Naive thymus-derived CD4-positive, alpha-beta T cell (primary cell): ENCODE measurements at regions of chr2 and their contacts with region 1.

Region 1: GRCh38 chr2:98608116-98608999 is at the starts of genes COA5 and UNC50:
- DNase-seq: peak; percentile 82 to 94 (median 87)
- ATAC-seq: peak; percentile 93
- H3K4me3 ChIP-seq: peak within 1 kb of the TSS; percentile 94
- H3K4me3 Mint-ChIP-seq: peak within 1 kb of the TSS; percentile 82 to 97 (median 90)
- H3K27ac ChIP-seq: peak within 1 kb of the TSS; percentile 97
- H3K27ac Mint-ChIP-seq: peak within 1 kb of the TSS; percentile 81 to 97 (median 92)
- H3K4me1 ChIP-seq: peaks cover 39 to 48% of the 10 kb centered on the region in 2 donors
- H3K4me1 Mint-ChIP-seq: peaks cover 51 to 82% (median 70%) of the 10 kb centered on the region in 7 donors
- H3K27me3 ChIP-seq: no peaks in the 10 kb centered on the region
- H3K27me3 Mint-ChIP-seq: no peaks in the 10 kb centered on the region
- total RNA-seq, gene COA5: 23.8 to 55.2 (median 29.2) TPM
- total RNA-seq, gene UNC50: 22.2 to 41.3 (median 29.9) TPM

Region 2: DNA sequence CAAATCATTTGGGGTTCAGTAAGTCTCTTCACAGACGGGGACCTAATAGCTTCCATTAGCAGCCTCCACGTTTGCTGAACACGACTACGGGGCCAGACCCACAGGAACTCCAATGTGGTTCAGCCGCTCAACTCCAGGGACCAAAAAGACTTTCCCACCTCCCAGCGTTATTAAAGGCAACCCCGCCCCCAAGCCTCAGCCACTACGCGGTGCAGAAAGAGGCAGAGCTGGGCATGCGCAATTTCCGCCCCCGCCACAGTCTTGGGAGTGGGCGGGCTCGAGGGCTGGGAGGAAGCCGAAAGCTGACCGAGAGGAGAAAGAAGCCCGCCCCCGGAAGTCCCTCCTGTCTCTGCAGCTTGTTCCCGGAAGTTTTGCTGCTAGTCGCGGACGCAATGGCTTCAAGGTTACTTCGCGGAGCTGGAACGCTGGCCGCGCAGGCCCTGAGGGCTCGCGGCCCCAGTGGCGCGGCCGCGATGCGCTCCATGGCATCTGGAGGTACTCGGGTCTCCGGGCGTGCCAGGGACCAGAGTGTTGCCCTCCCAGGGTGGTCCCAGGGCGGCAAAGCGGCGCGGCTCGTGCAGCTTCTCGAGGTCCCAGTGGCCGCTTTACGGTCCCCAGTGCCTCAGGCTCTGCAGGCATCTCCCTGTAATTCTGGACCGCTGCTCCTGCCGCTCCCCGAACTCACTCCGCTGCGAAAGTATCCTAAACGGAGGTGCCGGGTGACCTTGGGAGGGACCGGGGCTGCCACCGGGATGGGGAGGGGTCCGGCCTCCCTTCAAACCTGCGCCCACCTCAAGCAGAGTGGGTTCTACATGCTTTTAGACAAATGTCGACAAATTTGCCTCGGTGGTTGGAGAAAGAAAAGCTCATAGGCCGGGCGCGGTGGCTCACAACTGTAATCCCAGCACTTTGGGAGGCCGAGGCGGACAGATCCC is 962.4 kb before region 1 on chr2 and contains the start of gene COX5B:
- CTCF ChIA-PET with region 1: no interaction called
- POLR2A ChIA-PET with region 1: no interaction called
- intact Hi-C with region 1: loop called in 1 of 2 experiments (anchors 5 kb)
- DNase-seq: peak; percentile 91 to 99 (median 98)
- ATAC-seq: peak; percentile 99
- H3K4me3 ChIP-seq: peak within 1 kb of the TSS; percentile 99
- H3K4me3 Mint-ChIP-seq: peak within 1 kb of the TSS; percentile 86 to 97 (median 94)
- H3K27ac ChIP-seq: peak within 1 kb of the TSS; percentile 97
- H3K27ac Mint-ChIP-seq: peak within 1 kb of the TSS; percentile 91 to 99 (median 98)
- H3K4me1 ChIP-seq: peaks cover 15 to 17% of the 10 kb centered on the region in 2 donors
- H3K4me1 Mint-ChIP-seq: peaks cover 15 to 32% (median 26%) of the 10 kb centered on the region in 7 donors
- H3K27me3 ChIP-seq: no peaks in the 10 kb centered on the region
- H3K27me3 Mint-ChIP-seq: no peaks in the 10 kb centered on the region
- total RNA-seq, gene COX5B: 111 to 213 (median 122) TPM

Region 3: GRCh38 chr2:98623657-98624056 is 15.3 kb after region 1 on chr2:
- CTCF ChIA-PET with region 1: no interaction called
- POLR2A ChIA-PET with region 1: interaction called, 9 read pairs
- intact Hi-C with region 1: loop called in 1 of 2 experiments (anchors 2 kb)
- DNase-seq: no peak
- ATAC-seq: no peak
- H3K4me3 ChIP-seq: no peak overlapping the region
- H3K4me3 Mint-ChIP-seq: no peak overlapping the region
- H3K27ac ChIP-seq: no peak overlapping the region
- H3K27ac Mint-ChIP-seq: peak overlapping the region in 5 of 9 donors; percentile 43 to 87 (median 61)
- H3K4me1 ChIP-seq: no peaks in the 10 kb centered on the region
- H3K4me1 Mint-ChIP-seq: peaks cover 12 to 57% (median 28%) of the 10 kb centered on the region in 7 donors
- H3K27me3 ChIP-seq: no peaks in the 10 kb centered on the region
- H3K27me3 Mint-ChIP-seq: no peaks in the 10 kb centered on the region

Region 4: GRCh38 chr2:98835831-98836385 is 227.6 kb after region 1 on chr2:
- CTCF ChIA-PET with region 1: no interaction called
- POLR2A ChIA-PET with region 1: interaction called, 3 read pairs
- intact Hi-C with region 1: loop called in 1 of 2 experiments (anchors 1 kb)
- DNase-seq: peak in 7 of 9 donors; percentile 55 to 78 (median 72)
- ATAC-seq: peak; percentile 87
- H3K4me3 ChIP-seq: peak overlapping the region; percentile 1
- H3K4me3 Mint-ChIP-seq: peak overlapping the region; percentile 32 to 79 (median 52)
- H3K27ac ChIP-seq: peak overlapping the region; percentile 66
- H3K27ac Mint-ChIP-seq: peak overlapping the region; percentile 78 to 98 (median 88)
- H3K4me1 ChIP-seq: peaks cover 16 to 43% of the 10 kb centered on the region in 2 donors
- H3K4me1 Mint-ChIP-seq: peaks cover 24 to 51% (median 28%) of the 10 kb centered on the region in 7 donors
- H3K27me3 ChIP-seq: no peaks in the 10 kb centered on the region
- H3K27me3 Mint-ChIP-seq: peaks cover 0 to 17% (median 0%) of the 10 kb centered on the region in 5 donors

Region 5: GRCh38 chr2:98883780-98884211 is 275.4 kb after region 1 on chr2:
- CTCF ChIA-PET with region 1: no interaction called
- POLR2A ChIA-PET with region 1: no interaction called
- intact Hi-C with region 1: no loop called
- DNase-seq: no peak
- ATAC-seq: no peak
- H3K4me3 ChIP-seq: no peak overlapping the region
- H3K4me3 Mint-ChIP-seq: no peak overlapping the region
- H3K27ac ChIP-seq: no peak overlapping the region
- H3K27ac Mint-ChIP-seq: no peak overlapping the region
- H3K4me1 ChIP-seq: no peaks in the 10 kb centered on the region
- H3K4me1 Mint-ChIP-seq: peaks cover 0 to 2% (median 0%) of the 10 kb centered on the region in 7 donors
- H3K27me3 ChIP-seq: no peaks in the 10 kb centered on the region
- H3K27me3 Mint-ChIP-seq: peaks cover 13 to 32% (median 15%) of the 10 kb centered on the region in 5 donors

Region 6: DNA sequence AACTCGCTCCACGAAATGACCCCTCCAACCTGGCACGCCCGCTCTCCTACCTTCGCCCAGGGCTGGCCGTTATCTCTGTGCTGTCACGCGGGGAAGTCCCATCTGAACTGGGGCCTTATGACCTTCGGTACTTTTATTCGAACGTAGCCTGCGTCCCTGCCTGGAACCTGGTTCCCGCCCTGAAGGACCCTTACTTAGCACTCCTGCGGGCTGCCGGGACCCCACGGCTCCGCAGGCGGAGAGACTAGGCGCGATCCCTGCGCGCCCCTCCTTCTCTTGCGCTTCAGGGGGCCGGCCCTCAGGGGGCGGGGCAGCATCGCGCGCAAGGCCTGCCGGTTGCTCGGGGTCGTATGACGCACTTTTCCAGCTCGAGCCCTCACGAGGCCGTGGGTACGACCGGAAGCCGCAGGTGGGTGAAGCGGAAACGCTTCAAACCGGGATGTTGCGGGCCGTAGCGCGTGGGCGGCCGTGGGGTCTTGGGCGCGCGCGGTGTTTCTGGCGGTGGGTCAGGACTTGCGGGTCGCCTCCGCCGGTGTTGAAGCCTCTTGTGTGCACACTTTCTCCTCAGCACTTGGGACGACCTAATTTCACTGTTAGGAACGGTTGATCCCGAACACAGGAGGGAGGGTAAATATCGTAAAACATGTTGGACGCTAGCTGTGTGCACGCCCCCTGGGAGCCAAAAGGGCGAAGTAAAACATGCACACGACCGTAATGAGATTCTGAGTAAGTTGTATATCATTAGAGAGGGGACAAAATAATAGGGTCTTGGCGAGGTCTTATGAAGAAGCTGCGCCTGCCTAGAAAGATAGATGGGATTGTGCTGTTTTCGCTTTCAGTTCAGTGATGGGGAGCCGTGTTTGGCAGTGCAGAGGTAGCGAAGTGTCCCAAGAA is 546.5 kb after region 1 on chr2 and contains the starts of genes LIPT1 and TSGA10:
- CTCF ChIA-PET with region 1: no interaction called
- POLR2A ChIA-PET with region 1: no interaction called
- intact Hi-C with region 1: loop called in 1 of 2 experiments (anchors 10 kb)
- DNase-seq: peak; percentile 80 to 95 (median 92)
- ATAC-seq: peak; percentile 98
- H3K4me3 ChIP-seq: peak within 1 kb of the TSS; percentile 83
- H3K4me3 Mint-ChIP-seq: peak within 1 kb of the TSS in 1 of 10 donors; percentile 93
- H3K27ac ChIP-seq: peak within 1 kb of the TSS; percentile 92
- H3K27ac Mint-ChIP-seq: peak within 1 kb of the TSS in 2 of 9 donors; percentile 96 to 97
- H3K4me1 ChIP-seq: peaks cover 15 to 18% of the 10 kb centered on the region in 2 donors
- H3K4me1 Mint-ChIP-seq: peaks cover 25 to 57% (median 42%) of the 10 kb centered on the region in 7 donors
- H3K27me3 ChIP-seq: no peaks in the 10 kb centered on the region
- H3K27me3 Mint-ChIP-seq: no peaks in the 10 kb centered on the region
- total RNA-seq, gene LIPT1: 7.7 to 24.1 (median 15.9) TPM
- total RNA-seq, gene TSGA10: 3.5 to 31.7 (median 12.6) TPM